ENCODE measurements at regions of chr22 and their contacts with region 1.

Region 1: GRCh38 chr22:23750714-23751440 is at the start of gene ZNF70:
- DNase-seq: peak; percentile 95

Region 2: DNA sequence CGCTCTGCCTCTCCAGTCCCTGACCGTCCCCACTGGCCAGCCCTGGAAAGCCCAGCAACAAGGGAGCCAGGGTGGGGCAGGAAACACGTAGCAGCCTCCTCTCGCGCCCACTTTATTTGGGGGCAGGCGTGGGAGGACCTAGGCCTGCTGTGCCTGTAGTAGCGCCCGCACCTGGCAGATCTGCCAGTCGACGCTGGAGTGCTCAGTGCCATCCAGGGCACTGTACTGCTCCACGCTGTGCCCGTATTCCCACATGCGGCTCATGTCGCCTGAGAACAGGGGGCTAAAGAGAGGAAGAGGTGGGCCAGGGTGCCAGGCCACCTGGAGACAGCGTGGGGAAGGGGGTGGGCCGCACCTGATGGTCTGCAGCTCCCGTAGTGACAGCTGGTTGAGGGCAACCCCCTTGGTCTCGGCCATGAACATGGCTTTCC is 101.8 kb before region 1 on chr22:
- CTCF ChIA-PET with region 1: no interaction called
- POLR2A ChIA-PET with region 1: no interaction called
- DNase-seq: no peak

Region 3: GRCh38 chr22:23716811-23717801 is 33.8 kb before region 1 on chr22:
- CTCF ChIA-PET with region 1: no interaction called
- POLR2A ChIA-PET with region 1: interaction called, 10 read pairs
- DNase-seq: peak; percentile 97

Region 4: GRCh38 chr22:23767673-23768548 is 17.0 kb after region 1 on chr22 and contains the start of gene CHCHD10:
- CTCF ChIA-PET with region 1: interaction called, 3 read pairs
- POLR2A ChIA-PET with region 1: interaction called, 19 read pairs
- DNase-seq: peak; percentile 92